ENCODE measurements at regions of chr1 and their contacts with region 1.

Region 1: DNA sequence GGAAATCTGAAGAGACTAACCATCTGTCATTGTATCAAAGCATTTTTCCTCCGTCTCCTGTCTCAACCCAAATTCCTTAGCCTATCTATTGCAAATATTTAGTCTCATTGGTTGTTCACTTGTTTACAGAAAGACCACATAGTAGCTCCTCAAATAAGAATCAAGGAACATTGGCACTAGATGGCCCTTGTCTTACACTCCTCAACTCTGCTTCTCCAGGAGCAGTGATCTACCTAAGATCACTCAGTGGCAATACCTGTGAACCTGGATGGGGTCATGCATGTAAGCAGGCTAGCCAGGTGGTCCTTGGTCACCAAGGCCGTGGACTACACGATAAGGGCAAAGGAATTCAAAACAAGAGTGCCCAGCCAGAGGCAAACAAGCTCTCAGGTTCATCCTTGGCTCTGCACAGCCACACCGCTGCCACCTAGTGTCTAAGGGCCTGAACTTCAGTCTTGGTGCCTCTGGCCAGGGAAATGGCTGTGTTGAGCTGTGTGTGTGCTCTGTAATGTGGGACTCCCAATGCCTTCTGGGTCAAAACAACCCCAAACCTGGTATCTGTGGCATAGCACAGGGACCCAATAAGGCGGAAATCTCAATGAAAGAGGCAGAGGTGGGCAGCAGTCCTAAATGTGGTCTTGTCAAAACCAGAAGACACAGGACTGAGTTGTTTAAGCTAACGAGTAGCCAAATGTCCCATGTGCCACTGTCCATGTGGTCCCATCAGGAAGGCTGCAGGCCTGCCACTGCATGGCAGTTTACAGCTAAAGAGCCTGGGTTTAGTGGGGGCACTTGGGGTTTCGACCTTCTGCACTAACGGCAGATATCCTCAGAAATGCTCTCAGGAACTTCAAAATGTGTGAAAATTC is 54.5 kb downstream of the GPR161 start:
- DNase-seq: peak; percentile 88
- H3K4me3 Mint-ChIP-seq: no peak overlapping the region
- H3K27ac Mint-ChIP-seq: peak overlapping the region; percentile 82
- H3K4me1 Mint-ChIP-seq: peaks cover 28% of the 10 kb centered on the region
- H3K27me3 Mint-ChIP-seq: no peaks in the 10 kb centered on the region
- CTCF ChIP-seq: peak; percentile 95

Region 2: GRCh38 chr1:167599957-167600581 is 482.2 kb before region 1 on chr1:
- CTCF ChIA-PET with region 1: interaction called, 8 read pairs
- POLR2A ChIA-PET with region 1: no interaction called
- intact Hi-C with region 1: loop called (anchors 1 kb)
- DNase-seq: peak; percentile 75
- H3K4me3 Mint-ChIP-seq: no peak overlapping the region
- H3K27ac Mint-ChIP-seq: no peak overlapping the region
- H3K4me1 Mint-ChIP-seq: peaks cover 10% of the 10 kb centered on the region
- H3K27me3 Mint-ChIP-seq: no peaks in the 10 kb centered on the region
- CTCF ChIP-seq: peak; percentile 73

Region 3: GRCh38 chr1:167936068-167936929 is 145.9 kb before region 1 on chr1 and contains the start of gene DCAF6:
- CTCF ChIA-PET with region 1: interaction called, 6 read pairs
- POLR2A ChIA-PET with region 1: interaction called, 24 read pairs
- intact Hi-C with region 1: loop called (anchors 2 kb)
- DNase-seq: peak; percentile 100
- H3K4me3 Mint-ChIP-seq: peak within 1 kb of the TSS; percentile 81
- H3K27ac Mint-ChIP-seq: peak within 1 kb of the TSS; percentile 85
- H3K4me1 Mint-ChIP-seq: peaks cover 18% of the 10 kb centered on the region
- H3K27me3 Mint-ChIP-seq: no peaks in the 10 kb centered on the region
- CTCF ChIP-seq: no peak
- total RNA-seq, gene DCAF6: 57.2 and 60.8 TPM in 2 replicates

Region 4: GRCh38 chr1:168065506-168065905 is 16.7 kb before region 1 on chr1:
- CTCF ChIA-PET with region 1: interaction called, 39 read pairs
- POLR2A ChIA-PET with region 1: interaction called, 4 read pairs
- intact Hi-C with region 1: no loop called
- DNase-seq: no peak
- H3K4me3 Mint-ChIP-seq: no peak overlapping the region
- H3K27ac Mint-ChIP-seq: no peak overlapping the region
- H3K4me1 Mint-ChIP-seq: no peaks in the 10 kb centered on the region
- H3K27me3 Mint-ChIP-seq: no peaks in the 10 kb centered on the region
- CTCF ChIP-seq: no peak

Region 5: GRCh38 chr1:168112673-168113305 is 30.5 kb after region 1 on chr1:
- CTCF ChIA-PET with region 1: interaction called, 15 read pairs
- POLR2A ChIA-PET with region 1: interaction called, 3 read pairs
- intact Hi-C with region 1: no loop called
- DNase-seq: peak; percentile 100
- H3K4me3 Mint-ChIP-seq: peak overlapping the region; percentile 7
- H3K27ac Mint-ChIP-seq: peak overlapping the region; percentile 32
- H3K4me1 Mint-ChIP-seq: peaks cover 53% of the 10 kb centered on the region
- H3K27me3 Mint-ChIP-seq: no peaks in the 10 kb centered on the region
- CTCF ChIP-seq: no peak

Region 6: GRCh38 chr1:168145184-168146159 is 63.2 kb after region 1 on chr1:
- CTCF ChIA-PET with region 1: interaction called, 64 read pairs
- POLR2A ChIA-PET with region 1: no interaction called
- intact Hi-C with region 1: loop called (anchors 2 kb)
- DNase-seq: peak; percentile 90
- H3K4me3 Mint-ChIP-seq: no peak overlapping the region
- H3K27ac Mint-ChIP-seq: no peak overlapping the region
- H3K4me1 Mint-ChIP-seq: peaks cover 5% of the 10 kb centered on the region
- H3K27me3 Mint-ChIP-seq: no peaks in the 10 kb centered on the region
- CTCF ChIP-seq: peak; percentile 96

Region 7: DNA sequence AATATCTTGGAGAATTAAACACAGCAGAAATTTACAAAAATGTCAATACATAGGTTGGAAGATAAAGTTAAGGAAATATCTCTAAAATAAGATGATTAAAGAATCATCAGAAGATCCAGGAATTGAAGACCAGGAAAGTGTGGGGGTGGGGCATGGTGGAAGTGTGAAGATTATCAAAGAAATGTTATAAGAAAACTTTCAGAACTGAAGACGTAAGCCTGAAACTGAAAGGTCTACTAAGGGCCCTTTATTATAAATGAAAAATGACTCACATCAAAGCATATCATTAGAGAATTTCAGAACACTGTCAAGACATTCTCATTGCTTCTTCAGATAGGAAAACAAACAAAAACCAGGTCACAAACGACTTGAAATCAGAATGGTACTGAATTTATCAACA is 739.2 kb after region 1 on chr1:
- CTCF ChIA-PET with region 1: no interaction called
- POLR2A ChIA-PET with region 1: no interaction called
- intact Hi-C with region 1: no loop called
- DNase-seq: no peak
- H3K4me3 Mint-ChIP-seq: no peak overlapping the region
- H3K27ac Mint-ChIP-seq: no peak overlapping the region
- H3K4me1 Mint-ChIP-seq: no peaks in the 10 kb centered on the region
- H3K27me3 Mint-ChIP-seq: no peaks in the 10 kb centered on the region
- CTCF ChIP-seq: no peak